AG04449 (cell line): ENCODE measurements at regions of chr19 and their contacts with region 1.

Region 1: DNA sequence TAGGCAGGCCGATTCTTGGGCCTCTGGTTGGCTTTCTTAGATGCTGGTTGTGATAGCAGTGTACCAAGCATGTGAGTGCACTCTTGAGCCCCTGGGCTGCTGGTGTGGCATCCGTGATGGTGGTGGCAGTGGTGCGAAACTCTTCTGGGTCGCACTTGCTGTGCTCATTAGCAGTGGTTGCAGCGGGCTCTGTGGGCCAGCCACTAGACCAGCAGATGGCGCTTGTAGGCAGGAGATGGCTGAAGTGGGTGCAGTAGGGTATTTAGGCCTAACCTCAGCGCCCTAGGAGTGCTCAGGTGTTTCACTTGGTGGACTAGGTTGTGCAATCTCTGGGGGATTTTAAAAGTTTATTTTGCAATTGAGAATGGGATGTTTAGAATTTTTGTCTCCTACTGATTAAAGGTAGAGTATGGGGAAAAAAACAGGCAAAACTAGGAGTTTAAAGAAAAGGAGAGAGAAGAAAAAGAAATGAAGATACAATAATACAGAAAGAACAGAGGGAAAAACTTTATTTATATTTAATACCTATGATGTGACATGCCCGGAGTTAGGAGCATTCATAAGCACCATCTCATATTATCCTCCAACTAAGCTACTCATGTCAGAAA is 4.3 kb upstream of the ZNF17 start:
- DNase-seq: no peak
- H3K4me3 ChIP-seq: no peak overlapping the region
- CTCF ChIP-seq: peak; percentile 83

Region 2: GRCh38 chr19:57348136-57348535 is 58.5 kb before region 1 on chr19:
- CTCF ChIA-PET with region 1: no interaction called
- POLR2A ChIA-PET with region 1: no interaction called
- DNase-seq: peak; percentile 21
- H3K4me3 ChIP-seq: no peak overlapping the region
- CTCF ChIP-seq: no peak

Region 3: DNA sequence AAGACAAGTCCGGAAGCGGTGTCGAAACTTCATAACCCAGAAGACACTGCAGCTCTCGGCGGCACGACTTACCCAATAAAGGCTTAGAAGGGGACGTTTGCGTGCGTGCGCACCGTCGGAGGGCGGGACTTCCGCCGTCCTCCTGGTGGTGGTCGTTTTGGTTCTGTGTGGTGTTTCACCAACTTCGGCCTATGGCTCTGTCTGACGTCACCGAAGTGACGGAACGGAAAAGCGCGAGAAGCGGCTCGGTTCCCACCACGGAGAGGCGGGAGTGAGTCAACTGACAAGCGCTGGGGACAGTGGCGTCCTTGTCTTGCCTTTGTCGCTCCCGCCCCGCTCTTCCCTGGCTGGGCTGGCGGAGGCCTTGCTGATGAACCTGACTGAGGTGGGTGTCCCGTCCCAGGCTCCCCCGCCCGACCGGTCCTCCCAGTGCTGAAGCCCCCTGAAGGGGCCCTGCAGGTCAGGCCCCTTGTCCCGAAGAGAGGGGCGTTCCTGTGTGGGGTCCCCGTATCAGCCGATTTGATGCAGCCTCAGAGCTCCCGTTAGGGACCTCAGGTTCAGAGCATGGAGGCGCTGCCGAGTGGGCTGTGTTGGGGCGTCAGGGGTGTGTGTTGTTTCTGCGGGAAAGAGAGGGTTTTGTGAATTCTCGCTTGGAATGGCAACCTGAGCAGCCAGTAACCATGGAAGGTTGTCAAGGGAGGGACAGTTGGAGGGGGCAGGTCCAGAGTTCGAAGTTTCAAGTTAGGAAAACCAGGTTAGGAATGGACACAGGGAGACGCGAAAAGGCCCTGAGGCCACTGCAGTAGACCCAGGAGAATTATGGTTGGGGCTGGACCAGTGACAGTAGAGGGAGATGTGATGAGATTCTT is 16.7 kb before region 1 on chr19 and contains the start of gene ZNF548:
- CTCF ChIA-PET with region 1: interaction called, 15 read pairs
- POLR2A ChIA-PET with region 1: no interaction called
- DNase-seq: peak; percentile 97
- H3K4me3 ChIP-seq: peak within 1 kb of the TSS; percentile 87
- CTCF ChIP-seq: peak; percentile 18

Region 4: GRCh38 chr19:57443120-57443696 is 36.6 kb after region 1 on chr19:
- CTCF ChIA-PET with region 1: no interaction called
- POLR2A ChIA-PET with region 1: no interaction called
- DNase-seq: no peak
- H3K4me3 ChIP-seq: no peak overlapping the region
- CTCF ChIP-seq: no peak

Region 5: GRCh38 chr19:58154679-58155648 is 748.3 kb after region 1 on chr19:
- CTCF ChIA-PET with region 1: interaction called, 10 read pairs
- POLR2A ChIA-PET with region 1: no interaction called
- DNase-seq: peak; percentile 44
- H3K4me3 ChIP-seq: peak overlapping the region; percentile 85
- CTCF ChIP-seq: peak; percentile 100